HAP-1 (cell line): ENCODE measurements at regions of chr1 and their contacts with region 1.

Region 1: GRCh38 chr1:211680752-211681327 is 5.4 kb upstream of the NEK2 start:
- DNase-seq: peak; percentile 80 to 88
- H3K4me3 ChIP-seq: no peak overlapping the region
- H3K4me1 ChIP-seq: peaks cover 5% of the 10 kb centered on the region
- H3K27me3 ChIP-seq: no peaks in the 10 kb centered on the region

Region 2: GRCh38 chr1:211068976-211069375 is 611.9 kb before region 1 on chr1:
- in situ Hi-C with region 1: no loop called
- DNase-seq: no peak
- H3K4me3 ChIP-seq: no peak overlapping the region
- H3K4me1 ChIP-seq: no peaks in the 10 kb centered on the region
- H3K27me3 ChIP-seq: no peaks in the 10 kb centered on the region

Region 3: DNA sequence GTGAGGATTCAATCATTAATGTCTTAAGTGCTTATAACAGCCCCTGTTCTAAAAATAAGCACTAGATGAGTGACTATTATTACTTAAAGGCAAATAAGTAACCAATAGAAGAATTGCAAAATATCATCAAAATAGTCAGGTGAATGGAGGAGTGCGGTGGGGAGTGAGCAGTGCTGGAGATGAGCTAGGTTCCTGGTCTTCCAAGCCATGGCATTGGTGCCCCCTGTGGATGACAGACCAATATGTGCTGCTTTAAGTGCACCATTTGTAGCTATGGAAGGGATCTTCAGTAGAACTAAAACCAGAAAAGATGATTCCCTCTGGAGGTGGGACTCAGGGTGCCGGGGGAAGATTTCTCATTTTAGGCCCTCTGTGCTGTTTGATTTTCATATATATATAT is 55.8 kb before region 1 on chr1:
- in situ Hi-C with region 1: no loop called
- DNase-seq: no peak
- H3K4me3 ChIP-seq: no peak overlapping the region
- H3K4me1 ChIP-seq: no peaks in the 10 kb centered on the region
- H3K27me3 ChIP-seq: no peaks in the 10 kb centered on the region

Region 4: GRCh38 chr1:212035123-212035834 is 354.4 kb after region 1 on chr1 and contains the starts of genes DTL and INTS7:
- in situ Hi-C with region 1: loop called (anchors 25 kb)
- DNase-seq: peak; percentile 98 to 99
- H3K4me3 ChIP-seq: peak within 1 kb of the TSS; percentile 70
- H3K4me1 ChIP-seq: peaks cover 13% of the 10 kb centered on the region
- H3K27me3 ChIP-seq: no peaks in the 10 kb centered on the region

Region 5: GRCh38 chr1:212368073-212368484 is 687.2 kb after region 1 on chr1:
- in situ Hi-C with region 1: loop called (anchors 25 kb)
- DNase-seq: peak; percentile 58 to 71
- H3K4me3 ChIP-seq: no peak overlapping the region
- H3K4me1 ChIP-seq: no peaks in the 10 kb centered on the region
- H3K27me3 ChIP-seq: no peaks in the 10 kb centered on the region